ENCODE measurements at regions of chr11 and their contacts with region 1.

Region 1: GRCh38 chr11:86955361-86956120 is at the start of gene FZD4:
- DNase-seq: peak; percentile 77 to 86
- H3K4me3 ChIP-seq: peak within 1 kb of the TSS; percentile 93 to 98 (median 95)
- H3K27ac ChIP-seq: peak within 1 kb of the TSS; percentile 87 to 94
- H3K4me1 ChIP-seq: no peaks in the 10 kb centered on the region
- H3K27me3 ChIP-seq: no peaks in the 10 kb centered on the region
- CTCF ChIP-seq: no peak
- POLR2A ChIP-seq: no peak
- total RNA-seq, gene FZD4: 44.5 to 408 (median 72.8) TPM

Region 2: GRCh38 chr11:86990515-86990914 is 35.0 kb after region 1 on chr11:
- intact Hi-C with region 1: loop called (anchors 5 kb)
- DNase-seq: no peak
- H3K4me3 ChIP-seq: no peak overlapping the region
- H3K27ac ChIP-seq: no peak overlapping the region
- H3K4me1 ChIP-seq: no peaks in the 10 kb centered on the region
- H3K27me3 ChIP-seq: no peaks in the 10 kb centered on the region
- CTCF ChIP-seq: no peak
- POLR2A ChIP-seq: no peak

Region 3: DNA sequence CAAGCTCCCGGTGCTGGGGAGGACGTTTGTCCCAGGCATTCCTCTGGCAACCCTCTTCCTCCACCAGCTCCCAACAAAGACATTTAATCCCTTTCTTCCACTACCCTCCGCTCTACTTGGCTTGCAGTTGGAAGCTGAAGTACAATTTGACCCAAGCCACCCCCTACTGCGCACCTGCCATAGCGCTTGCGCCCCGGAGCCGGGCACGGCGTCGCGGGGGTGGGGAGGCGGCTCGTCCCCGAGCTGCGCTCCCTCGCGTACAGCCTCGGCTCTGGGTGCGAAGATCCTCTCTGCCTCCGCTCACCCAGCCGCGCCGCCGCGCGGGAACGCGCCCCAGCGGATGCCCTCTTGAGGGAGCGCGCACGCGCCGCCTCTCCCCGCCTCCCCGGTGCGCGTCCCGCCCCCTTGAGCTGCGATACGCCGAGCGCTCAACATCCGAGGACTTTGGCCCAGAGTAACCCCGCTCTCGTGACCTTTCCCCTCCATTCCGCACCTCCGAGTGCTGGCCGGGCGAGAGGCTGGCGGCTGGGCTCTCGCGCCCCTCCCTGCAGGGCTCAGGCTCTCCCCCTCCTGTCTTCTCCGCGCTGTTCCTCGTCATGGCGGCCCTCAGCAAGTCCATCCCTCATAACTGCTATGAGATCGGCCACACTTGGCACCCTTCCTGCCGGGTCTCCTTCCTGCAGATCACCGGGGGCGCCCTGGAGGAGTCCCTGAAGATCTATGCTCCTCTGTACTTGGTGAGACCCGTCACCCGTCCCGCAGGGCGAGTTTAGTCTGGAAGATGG is 82.1 kb after region 1 on chr11 and contains the start of gene TMEM135:
- intact Hi-C with region 1: loop called (anchors 10 kb)
- DNase-seq: peak; percentile 76 to 88
- H3K4me3 ChIP-seq: peak within 1 kb of the TSS; percentile 58 to 88 (median 81)
- H3K27ac ChIP-seq: peak within 1 kb of the TSS; percentile 88 to 97
- H3K4me1 ChIP-seq: peaks cover 0 to 4% of the 10 kb centered on the region in 2 donors
- H3K27me3 ChIP-seq: no peaks in the 10 kb centered on the region
- CTCF ChIP-seq: no peak
- POLR2A ChIP-seq: no peak
- total RNA-seq, gene TMEM135: 38.3 to 46.8 (median 43.2) TPM

Region 4: GRCh38 chr11:88320149-88320559 is 1364.6 kb after region 1 on chr11:
- intact Hi-C with region 1: loop called (anchors 5 kb)
- DNase-seq: no peak
- H3K4me3 ChIP-seq: no peak overlapping the region
- H3K27ac ChIP-seq: no peak overlapping the region
- H3K4me1 ChIP-seq: no peaks in the 10 kb centered on the region
- H3K27me3 ChIP-seq: no peaks in the 10 kb centered on the region
- CTCF ChIP-seq: no peak
- POLR2A ChIP-seq: no peak

Measured in breast epithelium (tissue), 4 donors.